Activated naive CD8-positive, alpha-beta T cell treated with anti-CD3 and anti-CD28 coated beads, Interleukin-2, amount 10 ng/mL, durations not matched to agents 7 days and 5 days (primary cell): ENCODE measurements at regions of chr10 and their contacts with region 1.

Region 1: DNA sequence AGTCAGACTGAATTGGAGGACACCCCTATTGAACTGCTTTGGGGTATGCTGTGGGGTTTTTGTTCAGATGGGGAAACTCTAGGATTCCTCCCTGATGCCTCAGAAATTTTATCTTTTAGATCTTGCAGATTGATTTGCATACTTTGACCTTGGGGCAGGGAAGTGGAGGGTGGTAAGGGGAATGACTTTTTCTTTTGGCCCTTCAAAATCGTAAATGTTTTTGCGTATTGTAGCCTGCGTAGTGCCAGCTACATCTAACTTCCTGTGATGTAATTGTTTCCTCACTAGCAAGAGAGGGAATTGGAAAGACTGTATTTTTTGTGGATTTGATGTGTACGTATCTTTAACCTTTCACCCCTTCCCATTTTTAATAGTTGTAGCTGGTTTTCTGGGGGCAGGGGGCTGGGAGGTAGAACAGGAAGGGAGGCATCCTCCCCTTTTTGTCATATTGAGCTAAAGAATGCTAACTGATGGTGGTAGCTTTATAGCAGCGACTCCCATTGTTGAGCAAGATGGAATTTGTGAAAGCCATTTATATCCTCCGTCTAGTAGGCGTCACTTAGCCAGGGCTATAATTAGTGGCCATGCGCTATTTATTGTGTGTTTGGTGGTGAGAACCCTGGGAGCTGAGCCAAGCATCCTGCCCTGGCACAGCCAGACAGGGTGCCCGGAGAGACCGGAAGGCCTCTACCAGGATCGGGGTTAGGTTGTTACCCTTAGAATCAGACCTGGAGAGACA is 11.3 kb downstream of the DUSP5 start:
- DNase-seq: no peak
- ATAC-seq: no peak
- H3K4me3 Mint-ChIP-seq: no peak overlapping the region
- H3K27ac Mint-ChIP-seq: no peak overlapping the region
- H3K4me1 Mint-ChIP-seq: peaks cover 45% of the 10 kb centered on the region
- H3K27me3 Mint-ChIP-seq: no peaks in the 10 kb centered on the region

Region 2: DNA sequence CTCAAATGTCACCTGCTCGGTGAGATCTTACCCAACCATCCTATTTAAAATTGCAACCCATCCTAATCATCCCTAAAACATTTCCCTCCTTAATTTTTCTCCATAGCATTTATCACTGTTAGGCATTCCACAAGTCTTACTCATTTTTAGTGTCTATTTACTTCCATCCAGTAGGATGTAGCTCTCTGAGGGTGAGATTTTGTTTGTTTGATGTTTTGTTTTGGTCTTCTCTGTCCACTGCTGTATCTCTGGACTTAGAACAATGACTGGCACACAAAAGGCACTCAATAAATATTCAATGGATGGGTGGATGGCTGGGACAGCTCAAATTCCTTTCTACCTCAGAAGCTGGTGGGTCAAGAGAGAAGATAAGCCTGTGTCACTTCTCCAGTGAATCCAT is 27.0 kb before region 1 on chr10:
- POLR2A ChIA-PET with region 1: no interaction called
- DNase-seq: no peak
- ATAC-seq: no peak
- H3K4me3 Mint-ChIP-seq: no peak overlapping the region
- H3K27ac Mint-ChIP-seq: no peak overlapping the region
- H3K4me1 Mint-ChIP-seq: peaks cover 2% of the 10 kb centered on the region
- H3K27me3 Mint-ChIP-seq: peaks cover 9% of the 10 kb centered on the region

Region 3: DNA sequence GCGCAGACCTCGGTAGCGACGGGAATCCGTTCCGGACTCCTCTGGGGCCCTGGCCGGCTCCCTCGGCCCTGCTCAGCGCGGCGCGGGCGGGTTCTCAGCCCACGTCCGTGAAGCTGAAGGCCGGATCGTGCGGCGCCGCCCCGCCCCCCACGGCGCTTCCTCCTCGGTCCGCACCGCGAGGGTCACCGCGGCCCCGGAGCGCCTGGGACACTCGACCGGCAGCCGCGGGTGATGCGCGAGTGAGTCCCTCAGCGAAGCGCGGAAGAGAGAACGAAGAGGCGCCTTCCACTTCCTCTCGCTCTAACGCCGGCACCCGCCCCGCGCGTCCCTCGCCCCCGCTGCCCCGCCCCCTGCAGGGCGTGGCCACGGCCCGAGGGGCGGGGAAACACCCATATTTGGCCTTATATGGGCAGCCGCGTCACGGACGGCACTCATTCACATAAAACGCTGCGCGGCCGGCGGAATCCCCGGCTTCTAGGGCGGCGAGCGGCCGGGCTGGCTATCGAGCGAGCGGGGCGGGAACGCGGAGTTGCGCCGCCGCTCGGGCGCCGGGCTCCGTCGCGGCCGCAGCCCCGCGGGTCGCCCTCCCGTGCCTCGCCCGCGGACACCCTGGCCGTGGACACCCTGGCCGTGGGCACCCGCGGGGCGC is 11.4 kb before region 1 on chr10 and contains the start of gene DUSP5:
- POLR2A ChIA-PET with region 1: interaction called, 11 read pairs
- DNase-seq: peak; percentile 99
- ATAC-seq: peak; percentile 71
- H3K4me3 Mint-ChIP-seq: peak within 1 kb of the TSS; percentile 91
- H3K27ac Mint-ChIP-seq: peak within 1 kb of the TSS; percentile 86
- H3K4me1 Mint-ChIP-seq: peaks cover 38% of the 10 kb centered on the region
- H3K27me3 Mint-ChIP-seq: no peaks in the 10 kb centered on the region
- total RNA-seq, gene DUSP5: 23.1 to 24.3 TPM